Naive thymus-derived CD8-positive, alpha-beta T cell (primary cell): ENCODE measurements at regions of chr17 and their contacts with region 1.

Region 1: DNA sequence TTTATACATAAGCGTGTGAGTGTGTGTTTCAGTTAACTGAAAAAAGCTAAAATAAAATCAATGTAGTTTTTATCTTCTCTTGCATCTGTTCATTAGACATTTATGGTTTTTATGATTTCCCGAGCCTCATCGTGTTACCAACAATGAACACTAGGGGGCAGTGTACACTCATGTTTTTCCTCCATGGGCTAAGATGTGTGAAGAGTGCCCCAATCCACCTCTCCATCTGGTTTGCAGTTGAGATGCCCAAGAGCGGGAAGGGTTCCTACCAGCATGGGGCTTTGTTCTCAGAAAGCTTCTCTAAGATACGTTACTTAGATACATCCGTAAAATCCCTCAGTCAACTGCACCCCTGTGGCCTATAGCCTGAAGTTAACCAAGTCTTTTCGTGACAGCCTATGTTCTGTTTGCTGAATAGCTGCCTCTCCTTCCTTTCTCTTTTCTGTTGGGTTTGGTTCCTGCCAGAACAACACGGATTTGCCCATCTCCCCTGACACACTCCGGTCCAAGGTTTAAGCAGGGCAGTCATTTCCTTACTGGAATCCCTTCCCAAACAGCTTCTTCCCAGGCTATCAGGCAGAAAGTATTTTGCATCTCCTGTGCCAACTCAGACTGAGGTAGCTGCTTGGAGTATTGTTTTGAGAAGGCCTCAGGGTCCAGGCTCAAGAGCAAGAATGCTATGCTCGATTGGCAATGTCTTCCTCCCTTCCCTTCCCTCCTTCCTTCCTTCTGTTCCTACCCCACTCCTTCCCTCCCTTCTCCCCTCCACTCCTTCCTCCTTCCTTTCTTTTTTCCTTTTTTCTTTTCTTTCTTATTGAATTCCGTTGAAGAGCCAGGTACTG is 12.9 kb upstream of the ELAC2 start:
- DNase-seq: peak in 9 of 10 donors; percentile 12 to 57 (median 32)
- ATAC-seq: peak; percentile 53 to 57
- H3K4me3 Mint-ChIP-seq: no peak overlapping the region
- H3K27ac Mint-ChIP-seq: peak overlapping the region in 5 of 10 donors; percentile 1 to 69 (median 60)
- H3K4me1 Mint-ChIP-seq: peaks cover 0 to 16% (median 8%) of the 10 kb centered on the region in 4 donors
- H3K27me3 Mint-ChIP-seq: peaks cover 7 to 21% (median 13%) of the 10 kb centered on the region in 5 donors

Region 2: DNA sequence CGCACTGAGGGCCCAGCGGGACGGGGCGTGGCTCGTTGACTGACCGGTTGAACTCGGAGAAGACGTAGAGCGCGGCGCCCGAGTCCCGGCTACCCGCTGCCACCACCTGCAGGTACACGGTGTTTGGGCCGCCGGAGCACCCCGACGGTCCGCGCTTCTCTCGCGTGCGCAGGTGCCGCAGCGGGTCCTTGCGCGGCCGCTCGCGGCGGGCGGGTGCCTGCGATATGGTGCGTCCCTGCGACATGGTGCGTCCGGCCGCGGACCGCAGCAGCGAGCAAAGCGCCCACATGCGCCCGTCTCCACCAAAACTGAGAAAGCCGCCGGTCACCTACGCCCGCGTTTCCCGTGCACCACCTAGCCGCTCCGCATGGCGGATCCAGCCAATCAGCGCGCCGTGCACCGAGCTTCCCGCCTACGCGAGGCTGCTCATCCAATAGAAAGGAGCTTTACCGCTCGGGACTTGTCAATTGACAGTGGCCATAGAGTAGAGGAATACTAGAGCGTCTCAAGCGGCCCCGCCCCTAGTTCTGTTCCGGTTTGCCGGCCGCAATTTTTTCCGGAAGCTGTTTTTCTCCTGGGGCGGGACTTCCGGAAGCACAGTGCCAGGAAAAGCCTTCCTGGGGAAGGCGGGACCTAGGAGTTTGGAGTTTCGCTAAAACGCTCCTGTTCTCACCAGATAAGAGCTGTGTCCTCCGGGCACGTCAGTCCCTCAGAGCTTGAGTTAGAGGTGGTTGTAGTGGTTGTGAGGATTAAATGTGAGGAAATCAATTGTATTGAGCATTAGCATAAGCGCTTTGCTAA is 12.8 kb before region 1 on chr17 and contains the start of gene ELAC2:
- POLR2A ChIA-PET with region 1: interaction called, 10 read pairs
- DNase-seq: peak; percentile 84 to 97 (median 96)
- ATAC-seq: peak; percentile 99
- H3K4me3 Mint-ChIP-seq: peak within 1 kb of the TSS; percentile 94 to 99 (median 98)
- H3K27ac Mint-ChIP-seq: peak within 1 kb of the TSS; percentile 91 to 99 (median 97)
- H3K4me1 Mint-ChIP-seq: peaks cover 13 to 37% (median 35%) of the 10 kb centered on the region in 4 donors
- H3K27me3 Mint-ChIP-seq: no peaks in the 10 kb centered on the region
- polyA plus RNA-seq, gene ELAC2: 37.8 to 60.3 (median 46.1) TPM

Region 3: GRCh38 chr17:13044572-13045065 is 13.9 kb after region 1 on chr17:
- POLR2A ChIA-PET with region 1: no interaction called
- DNase-seq: no peak
- ATAC-seq: no peak
- H3K4me3 Mint-ChIP-seq: no peak overlapping the region
- H3K27ac Mint-ChIP-seq: no peak overlapping the region
- H3K4me1 Mint-ChIP-seq: no peaks in the 10 kb centered on the region
- H3K27me3 Mint-ChIP-seq: peaks cover 12 to 56% (median 13%) of the 10 kb centered on the region in 5 donors

Region 4: GRCh38 chr17:13212860-13213259 is 182.2 kb after region 1 on chr17:
- POLR2A ChIA-PET with region 1: no interaction called
- DNase-seq: no peak
- ATAC-seq: no peak
- H3K4me3 Mint-ChIP-seq: no peak overlapping the region
- H3K27ac Mint-ChIP-seq: no peak overlapping the region
- H3K4me1 Mint-ChIP-seq: no peaks in the 10 kb centered on the region
- H3K27me3 Mint-ChIP-seq: peaks cover 0 to 27% (median 6%) of the 10 kb centered on the region in 5 donors